ENCODE measurements at regions of chr1 and their contacts with region 1.

Region 1: DNA sequence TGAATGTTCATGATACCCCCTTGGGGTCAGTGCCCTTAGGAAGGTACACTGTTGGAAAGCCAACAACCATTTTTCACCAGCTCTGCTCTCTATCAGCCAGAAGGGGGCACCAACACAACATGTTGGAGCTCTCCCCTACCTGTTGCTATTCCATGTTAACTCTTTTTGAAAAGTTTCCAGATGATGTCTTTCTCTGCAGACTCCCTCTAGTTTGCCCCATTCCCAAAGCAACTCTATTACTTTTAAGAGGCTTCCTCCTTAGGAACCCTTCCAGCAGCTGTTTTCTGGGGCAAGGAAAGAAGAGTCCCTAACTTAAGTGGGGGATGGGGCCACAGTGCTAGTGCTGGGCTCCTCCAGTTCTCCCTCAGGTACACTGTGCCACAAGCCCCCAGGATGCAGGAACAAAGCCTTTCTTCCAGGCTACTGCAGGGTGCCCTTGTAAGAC is 22.9 kb upstream of the NDC1 start:
- DNase-seq: peak; percentile 60
- ATAC-seq: peak; percentile 80
- H3K4me3 Mint-ChIP-seq: no peak overlapping the region
- H3K27ac Mint-ChIP-seq: no peak overlapping the region
- H3K4me1 Mint-ChIP-seq: peaks cover 4% of the 10 kb centered on the region
- H3K27me3 Mint-ChIP-seq: no peaks in the 10 kb centered on the region
- CTCF ChIP-seq: peak; percentile 95

Region 2: GRCh38 chr1:53847980-53848379 is 13.0 kb before region 1 on chr1:
- CTCF ChIA-PET with region 1: interaction called, 27 read pairs
- POLR2A ChIA-PET with region 1: no interaction called
- intact Hi-C with region 1: no loop called
- DNase-seq: no peak
- ATAC-seq: no peak
- H3K4me3 Mint-ChIP-seq: no peak overlapping the region
- H3K27ac Mint-ChIP-seq: no peak overlapping the region
- H3K4me1 Mint-ChIP-seq: no peaks in the 10 kb centered on the region
- H3K27me3 Mint-ChIP-seq: no peaks in the 10 kb centered on the region
- CTCF ChIP-seq: no peak

Region 3: DNA sequence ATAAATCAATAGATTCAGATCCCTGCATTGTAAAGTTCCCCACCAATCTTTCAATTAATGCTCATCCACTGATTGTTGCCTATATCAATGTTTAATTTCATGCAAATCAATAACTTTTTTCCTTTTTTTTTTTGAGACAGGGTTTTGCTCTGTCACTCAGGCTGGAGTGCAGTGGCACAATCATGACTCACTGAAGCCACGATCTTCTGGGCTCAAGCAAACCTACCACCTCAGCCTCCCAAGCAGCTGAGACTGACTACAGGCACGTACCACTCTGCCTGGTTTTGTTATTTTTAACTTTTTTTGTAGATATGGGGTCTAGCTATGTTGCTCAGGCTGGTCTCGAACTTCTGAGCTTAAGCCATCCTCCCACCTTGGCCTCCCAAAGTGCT is 58.7 kb after region 1 on chr1:
- CTCF ChIA-PET with region 1: interaction called, 15 read pairs
- POLR2A ChIA-PET with region 1: no interaction called
- intact Hi-C with region 1: no loop called
- DNase-seq: peak; percentile 68
- ATAC-seq: peak; percentile 89
- H3K4me3 Mint-ChIP-seq: no peak overlapping the region
- H3K27ac Mint-ChIP-seq: peak overlapping the region; percentile 90
- H3K4me1 Mint-ChIP-seq: peaks cover 36% of the 10 kb centered on the region
- H3K27me3 Mint-ChIP-seq: no peaks in the 10 kb centered on the region
- CTCF ChIP-seq: no peak

Region 4: DNA sequence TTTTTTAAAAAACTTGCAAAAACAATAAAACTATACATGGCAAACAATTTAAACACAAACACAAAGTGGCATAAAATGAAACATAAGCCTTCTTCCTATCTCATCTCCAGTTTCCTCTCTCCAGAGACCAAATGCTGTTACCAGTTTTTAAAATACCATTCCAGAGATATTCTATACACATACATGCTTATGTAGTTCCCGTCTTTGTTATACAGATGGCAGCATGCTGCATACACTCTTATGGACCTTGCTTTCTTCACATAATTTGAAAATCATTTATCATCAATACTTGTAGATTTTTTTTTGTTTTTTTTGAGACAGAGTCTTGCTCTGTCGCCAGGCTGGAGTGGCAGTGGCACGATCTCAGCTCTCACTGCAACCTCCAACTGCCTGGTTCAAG is 92.1 kb after region 1 on chr1:
- CTCF ChIA-PET with region 1: interaction called, 146 read pairs
- POLR2A ChIA-PET with region 1: interaction called, 3 read pairs
- intact Hi-C with region 1: loop called (anchors 5 kb)
- DNase-seq: no peak
- ATAC-seq: no peak
- H3K4me3 Mint-ChIP-seq: no peak overlapping the region
- H3K27ac Mint-ChIP-seq: no peak overlapping the region
- H3K4me1 Mint-ChIP-seq: peaks cover 25% of the 10 kb centered on the region
- H3K27me3 Mint-ChIP-seq: no peaks in the 10 kb centered on the region
- CTCF ChIP-seq: no peak

Region 5: GRCh38 chr1:54001591-54001990 is 140.6 kb after region 1 on chr1:
- CTCF ChIA-PET with region 1: no interaction called
- POLR2A ChIA-PET with region 1: no interaction called
- intact Hi-C with region 1: no loop called
- DNase-seq: no peak
- ATAC-seq: no peak
- H3K4me3 Mint-ChIP-seq: no peak overlapping the region
- H3K27ac Mint-ChIP-seq: no peak overlapping the region
- H3K4me1 Mint-ChIP-seq: no peaks in the 10 kb centered on the region
- H3K27me3 Mint-ChIP-seq: no peaks in the 10 kb centered on the region
- CTCF ChIP-seq: no peak

Region 6: DNA sequence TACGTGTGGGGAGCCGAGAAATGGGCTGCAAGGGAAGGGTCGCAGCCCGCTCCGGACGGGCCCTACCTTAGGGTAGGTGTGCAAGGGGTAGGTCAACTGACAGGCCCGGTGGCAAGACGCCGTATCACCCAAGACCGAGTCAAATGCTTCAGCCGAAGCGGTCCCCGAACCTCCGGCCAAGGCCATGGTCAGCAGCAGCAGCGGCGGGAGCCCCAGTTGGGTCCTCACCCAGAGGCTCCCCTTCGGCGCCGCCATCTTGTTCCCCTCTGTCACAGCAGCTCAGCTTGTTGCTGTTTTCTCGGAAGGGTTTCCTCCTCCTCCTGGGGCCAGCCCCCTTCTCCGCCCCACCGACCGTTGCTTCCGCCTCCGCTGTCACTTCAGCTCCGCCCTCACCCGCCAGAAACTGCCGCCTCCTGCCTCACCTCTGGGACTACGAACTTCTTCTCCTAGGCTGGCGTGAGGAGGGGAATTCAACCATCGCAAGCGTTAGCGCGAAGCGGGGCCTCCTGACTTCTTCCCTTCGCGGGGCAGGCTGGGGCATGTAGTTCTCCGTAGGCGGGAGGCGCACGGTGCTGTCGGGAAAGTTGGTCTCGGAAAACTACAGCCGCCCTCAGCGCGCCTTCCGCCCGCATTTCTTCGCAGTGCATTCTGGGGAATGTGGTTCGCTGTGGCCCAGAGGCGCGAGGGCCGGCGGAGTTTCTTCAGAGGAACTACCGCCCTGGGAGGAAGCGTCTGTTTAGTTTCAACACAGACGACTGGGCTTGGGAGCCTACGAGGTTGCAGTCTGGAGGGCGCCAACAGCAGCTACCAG is 192.2 kb after region 1 on chr1 and contains the starts of genes TCEANC2 and TMEM59:
- CTCF ChIA-PET with region 1: interaction called, 14 read pairs
- POLR2A ChIA-PET with region 1: no interaction called
- intact Hi-C with region 1: no loop called
- DNase-seq: peak; percentile 99
- ATAC-seq: peak; percentile 95
- H3K4me3 Mint-ChIP-seq: no peak within 1 kb of the TSS
- H3K27ac Mint-ChIP-seq: no peak within 1 kb of the TSS
- H3K4me1 Mint-ChIP-seq: peaks cover 31% of the 10 kb centered on the region
- H3K27me3 Mint-ChIP-seq: no peaks in the 10 kb centered on the region
- CTCF ChIP-seq: no peak
- total RNA-seq, gene TCEANC2: 11.1 to 11.2 TPM
- total RNA-seq, gene TMEM59: 93.4 to 109 TPM

Measured in activated CD8-positive, alpha-beta T cell treated with anti-CD3 and anti-CD28 coated beads for 36 hours (primary cell).